Motor neuron (in vitro differentiated cells): ENCODE measurements at regions of chr2 and their contacts with region 1.

Region 1: GRCh38 chr2:137659612-137660011 is 304.7 kb upstream of the HNMT start:
- ATAC-seq: peak; percentile 61 to 92 (median 68)
- H3K4me3 ChIP-seq: no peak overlapping the region
- H3K27ac ChIP-seq: no peak overlapping the region
- H3K4me1 ChIP-seq: no peaks in the 10 kb centered on the region

Region 2: DNA sequence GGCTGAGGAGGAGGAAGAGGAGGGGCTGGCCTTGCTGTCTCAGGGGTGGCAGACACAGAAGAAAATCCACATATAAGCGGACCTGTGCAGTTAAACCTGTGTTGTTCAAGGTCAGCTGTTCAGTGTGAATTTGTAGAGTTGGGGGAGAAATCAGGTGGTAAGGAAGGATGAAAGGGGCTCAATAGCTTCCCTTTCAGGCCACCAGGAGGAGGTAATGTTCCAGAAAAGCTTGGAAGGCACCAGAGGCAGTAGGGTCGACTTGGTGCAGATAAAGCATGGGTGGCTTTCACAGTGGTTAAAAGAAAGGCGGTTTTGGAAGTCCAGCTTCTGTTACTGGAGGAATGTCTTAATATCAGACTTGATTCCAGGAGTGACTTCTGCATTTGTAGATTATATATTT is 726.9 kb before region 1 on chr2:
- in situ Hi-C with region 1: loop called in 1 of 9 experiments (anchors 25 kb)
- ATAC-seq: peak in 4 of 8 experiments; percentile 49 to 91 (median 58)
- H3K4me3 ChIP-seq: no peak overlapping the region
- H3K27ac ChIP-seq: no peak overlapping the region
- H3K4me1 ChIP-seq: peaks cover 0 to 3% of the 10 kb centered on the region in 2 donors

Region 3: GRCh38 chr2:137420744-137421143 is 238.9 kb before region 1 on chr2:
- in situ Hi-C with region 1: no loop called
- ATAC-seq: peak in 1 of 8 experiments; percentile 30
- H3K4me3 ChIP-seq: no peak overlapping the region
- H3K27ac ChIP-seq: no peak overlapping the region
- H3K4me1 ChIP-seq: no peaks in the 10 kb centered on the region